ENCODE measurements at regions of chr20 and their contacts with region 1.

Region 1: DNA sequence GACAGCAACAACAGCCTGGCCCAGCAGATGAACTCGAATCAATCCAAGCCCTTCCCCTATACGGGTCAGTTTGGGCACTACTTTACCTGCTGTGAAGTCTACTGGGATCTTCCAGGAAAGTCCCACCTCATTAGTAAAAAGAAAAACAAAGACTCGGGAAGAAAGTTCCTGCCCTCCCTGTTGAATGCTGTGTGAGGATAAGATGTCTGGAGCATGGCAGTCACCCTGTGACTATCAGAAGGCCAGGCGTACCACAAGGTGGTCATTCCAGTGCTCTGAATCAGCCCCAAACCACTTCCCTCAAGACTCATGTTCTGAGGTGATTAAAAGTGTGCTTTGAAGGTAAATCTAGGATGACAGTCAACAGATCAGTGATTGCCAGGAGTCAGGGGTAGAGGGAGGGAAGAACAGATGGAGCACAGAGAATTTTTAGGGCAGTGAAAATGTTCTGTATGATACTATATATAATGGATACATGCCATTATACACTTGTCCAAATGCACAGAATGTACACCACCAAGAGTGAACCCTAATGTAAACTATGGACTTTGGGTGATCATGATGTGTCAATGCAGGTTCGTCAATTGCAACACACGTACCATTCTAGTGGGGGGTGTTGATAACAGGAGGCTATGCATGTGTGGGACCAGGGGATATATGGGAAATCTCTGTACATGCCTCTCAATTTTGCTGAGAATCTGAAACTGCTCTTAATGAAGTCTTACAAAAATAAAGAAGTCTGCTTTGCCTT is 14.7 kb downstream of the FKBP1A start:
- DNase-seq: peak; percentile 66
- H3K4me3 Mint-ChIP-seq: peak overlapping the region; percentile 34
- H3K27ac Mint-ChIP-seq: peak overlapping the region; percentile 95
- H3K4me1 Mint-ChIP-seq: peaks cover 84% of the 10 kb centered on the region
- H3K27me3 Mint-ChIP-seq: no peaks in the 10 kb centered on the region

Region 2: DNA sequence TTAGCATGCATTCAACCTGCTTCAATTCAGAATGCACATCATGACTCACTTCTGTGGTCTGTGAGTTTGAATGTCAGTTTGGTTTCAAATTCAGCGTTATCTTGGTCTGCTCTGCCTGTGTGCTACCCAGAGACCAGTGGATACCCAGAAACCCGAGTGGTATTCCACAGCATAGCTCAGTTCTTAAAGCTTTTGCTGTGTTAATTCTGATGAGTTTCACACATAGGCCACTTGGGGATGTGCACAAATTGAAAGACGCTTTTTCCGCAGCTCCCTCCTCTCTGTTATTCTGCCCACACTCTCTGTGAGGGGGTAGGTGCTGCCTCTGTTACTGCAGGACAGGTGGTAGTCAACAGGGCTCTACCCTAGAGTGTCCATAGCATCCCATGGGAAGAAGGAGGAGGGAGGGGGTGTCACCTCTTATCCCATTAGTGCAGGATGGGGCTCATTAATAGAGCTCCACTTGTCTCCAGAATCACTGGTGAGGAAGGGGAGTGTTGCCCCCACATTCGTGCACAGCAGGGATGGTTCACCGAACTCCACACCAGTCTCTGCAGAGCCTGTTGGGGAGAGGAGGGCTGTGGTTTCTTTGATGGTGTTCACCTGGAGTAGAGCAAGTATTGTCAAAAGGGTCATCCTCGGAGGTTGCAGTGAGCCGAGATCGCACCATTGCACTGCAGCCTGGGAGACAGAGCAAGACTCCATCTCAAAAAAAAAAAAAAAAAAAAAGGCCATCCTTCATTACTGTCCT is 20.1 kb before region 1 on chr20:
- CTCF ChIA-PET with region 1: interaction called, 5 read pairs
- POLR2A ChIA-PET with region 1: interaction called, 3 read pairs
- intact Hi-C with region 1: loop called (anchors 1 kb)
- DNase-seq: peak; percentile 64
- H3K4me3 Mint-ChIP-seq: peak overlapping the region; percentile 23
- H3K27ac Mint-ChIP-seq: peak overlapping the region; percentile 72
- H3K4me1 Mint-ChIP-seq: peaks cover 58% of the 10 kb centered on the region
- H3K27me3 Mint-ChIP-seq: no peaks in the 10 kb centered on the region